ENCODE measurements at regions of chr15 and their contacts with region 1.

Region 1: GRCh38 chr15:41827880-41828806 is at the start of gene JMJD7:
- DNase-seq: peak; percentile 83
- H3K4me3 ChIP-seq: peak within 1 kb of the TSS; percentile 69 to 93 (median 73)
- H3K27ac ChIP-seq: peak within 1 kb of the TSS; percentile 84
- H3K4me1 ChIP-seq: peaks cover 55% of the 10 kb centered on the region
- H3K27me3 ChIP-seq: no peaks in the 10 kb centered on the region
- CTCF ChIP-seq: no peak
- total RNA-seq, gene JMJD7: 5.8 to 22.3 TPM

Region 2: GRCh38 chr15:41894791-41895463 is 66.8 kb after region 1 on chr15:
- CTCF ChIA-PET with region 1: no interaction called
- dilution Hi-C with region 1: no loop called
- in situ Hi-C with region 1: no loop called
- intact Hi-C with region 1: loop called (anchors 2 kb)
- DNase-seq: peak; percentile 86
- H3K4me3 ChIP-seq: peak overlapping the region in 2 of 3 experiments; percentile 6 to 16
- H3K27ac ChIP-seq: peak overlapping the region; percentile 72
- H3K4me1 ChIP-seq: peaks cover 32% of the 10 kb centered on the region
- H3K27me3 ChIP-seq: no peaks in the 10 kb centered on the region
- CTCF ChIP-seq: peak in 1 of 2 donors; percentile 43

Region 3: GRCh38 chr15:41904541-41905005 is 76.4 kb after region 1 on chr15:
- CTCF ChIA-PET with region 1: no interaction called
- dilution Hi-C with region 1: no loop called
- in situ Hi-C with region 1: no loop called
- intact Hi-C with region 1: loop called (anchors 1 kb)
- DNase-seq: peak; percentile 42
- H3K4me3 ChIP-seq: no peak overlapping the region
- H3K27ac ChIP-seq: no peak overlapping the region
- H3K4me1 ChIP-seq: no peaks in the 10 kb centered on the region
- H3K27me3 ChIP-seq: no peaks in the 10 kb centered on the region
- CTCF ChIP-seq: peak; percentile 80 to 88

Region 4: DNA sequence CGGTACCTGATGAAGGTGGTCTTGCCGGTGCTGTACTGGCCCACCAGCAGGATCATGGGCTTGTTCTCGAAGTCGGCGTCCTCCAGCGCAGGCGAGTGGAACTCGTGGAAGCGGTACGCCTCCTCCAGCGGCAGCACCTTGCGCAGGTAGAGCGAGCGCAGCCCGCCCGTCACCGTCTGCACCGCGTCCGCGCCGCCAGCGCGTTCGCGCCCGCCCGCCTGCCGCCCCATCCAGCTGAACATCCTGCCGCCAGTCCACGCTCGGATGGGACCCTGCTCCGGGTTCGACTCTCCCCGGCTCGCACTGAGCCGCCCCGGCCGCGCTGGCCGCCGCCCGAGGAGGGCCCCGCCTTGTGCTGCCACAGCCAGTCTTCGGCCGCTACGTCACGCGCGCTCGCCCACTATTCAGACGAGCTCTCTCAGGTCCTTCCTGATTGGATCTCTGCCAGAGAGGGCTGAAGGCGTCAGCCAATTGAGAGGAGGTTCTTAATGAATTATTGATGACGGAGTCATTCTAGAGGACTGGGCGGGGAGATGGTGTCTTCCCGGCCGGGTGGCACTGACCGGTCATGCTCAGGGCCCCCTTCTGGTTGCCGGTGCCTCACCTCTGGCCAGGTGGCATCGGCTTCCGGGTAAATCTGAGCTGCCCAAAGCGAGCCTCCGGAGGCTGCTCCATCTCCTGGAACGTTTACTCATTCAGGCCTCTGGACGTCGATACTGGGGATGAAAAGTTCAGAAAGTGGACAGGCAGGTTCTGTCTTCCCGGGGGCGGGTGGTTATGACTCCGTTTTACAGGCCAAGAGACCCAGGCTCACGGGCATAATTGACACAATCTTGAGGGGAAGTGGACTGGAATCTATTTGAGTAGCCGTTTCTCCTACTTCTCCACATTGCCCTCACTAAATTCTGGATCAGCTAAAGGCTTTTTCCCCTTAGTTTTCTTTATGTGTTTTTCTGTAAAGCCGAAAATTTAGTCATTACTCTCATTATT is 144.4 kb after region 1 on chr15 and contains the start of gene EHD4:
- CTCF ChIA-PET with region 1: no interaction called
- dilution Hi-C with region 1: no loop called
- in situ Hi-C with region 1: no loop called
- intact Hi-C with region 1: loop called (anchors 5 kb)
- DNase-seq: peak; percentile 99
- H3K4me3 ChIP-seq: peak within 1 kb of the TSS; percentile 87 to 98 (median 98)
- H3K27ac ChIP-seq: peak within 1 kb of the TSS; percentile 74
- H3K4me1 ChIP-seq: peaks cover 37% of the 10 kb centered on the region
- H3K27me3 ChIP-seq: no peaks in the 10 kb centered on the region
- CTCF ChIP-seq: peak in 1 of 2 donors; percentile 50
- total RNA-seq, gene EHD4: 53.6 to 65.0 TPM